ENCODE measurements at regions of chr2 and their contacts with region 1.

Region 1: DNA sequence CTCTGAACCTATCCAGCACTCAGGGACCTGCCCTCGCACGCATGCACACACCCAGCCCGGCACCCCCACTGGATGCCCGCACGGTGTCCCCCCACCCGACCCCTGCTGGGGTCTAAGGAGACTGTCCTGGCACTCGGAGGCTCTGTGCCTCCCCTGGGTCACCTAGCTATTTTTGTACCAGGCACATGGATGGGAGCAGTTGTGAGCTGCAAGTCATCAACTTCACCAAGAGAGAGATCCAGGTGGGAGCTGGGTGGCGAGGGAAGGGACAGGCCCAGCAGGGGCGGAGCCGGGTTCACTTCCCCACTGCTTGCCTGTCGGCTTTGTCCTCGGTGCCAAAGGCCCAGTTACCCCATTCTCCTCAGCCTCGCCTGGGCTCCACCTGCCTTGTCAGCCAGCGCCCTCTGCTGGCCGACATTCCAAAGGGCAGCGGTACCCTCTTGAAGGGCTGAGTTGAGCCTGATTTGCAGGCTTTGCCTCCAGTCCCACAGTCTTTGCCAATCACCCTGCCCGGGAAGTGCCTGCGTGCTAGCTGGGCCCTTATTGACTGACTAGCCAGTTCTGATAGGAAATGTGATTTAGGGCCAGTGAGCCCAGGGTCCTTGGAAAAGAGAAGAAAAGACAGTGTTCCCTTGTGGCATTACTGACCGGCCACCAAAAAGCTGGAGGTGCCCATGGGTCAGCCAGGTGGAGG is 5.8 kb downstream of the NT5DC4 start:
- DNase-seq: peak; percentile 92 to 93 (median 93)
- ATAC-seq: peak; percentile 97
- H3K4me3 ChIP-seq: no peak overlapping the region
- H3K4me1 ChIP-seq: no peaks in the 10 kb centered on the region
- CTCF ChIP-seq: peak; percentile 95

Region 2: GRCh38 chr2:112597537-112598322 is 128.9 kb before region 1 on chr2:
- intact Hi-C with region 1: loop called in 1 of 2 experiments (anchors 5 kb)
- DNase-seq: no peak
- ATAC-seq: no peak
- H3K4me3 ChIP-seq: no peak overlapping the region
- H3K4me1 ChIP-seq: peaks cover 7% of the 10 kb centered on the region
- CTCF ChIP-seq: no peak

Region 3: GRCh38 chr2:112626604-112627059 is 100.0 kb before region 1 on chr2:
- intact Hi-C with region 1: loop called (anchors 10 kb)
- DNase-seq: peak; percentile 62 to 75 (median 67)
- ATAC-seq: peak; percentile 71
- H3K4me3 ChIP-seq: no peak overlapping the region
- H3K4me1 ChIP-seq: peaks cover 13% of the 10 kb centered on the region
- CTCF ChIP-seq: peak; percentile 76

Region 4: DNA sequence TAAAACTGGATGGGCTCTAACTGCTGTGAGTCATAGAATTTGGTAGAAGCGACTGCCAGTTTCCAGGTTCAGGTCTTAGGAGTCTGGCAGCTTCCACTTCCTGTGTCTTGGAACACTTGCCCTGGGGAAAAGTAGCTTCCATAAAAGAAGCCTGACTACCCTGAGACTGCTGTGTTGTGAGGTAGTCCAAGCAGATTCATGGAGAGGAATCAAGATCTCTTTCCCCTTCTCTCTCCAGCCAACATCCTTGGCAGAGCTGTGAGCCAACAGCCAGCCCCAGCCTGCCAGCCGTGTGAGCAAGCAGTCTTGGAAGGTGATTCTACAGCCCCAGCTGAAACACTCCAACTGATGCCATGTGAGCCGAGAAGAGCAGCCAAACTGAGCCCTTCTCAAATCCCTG is 47.2 kb before region 1 on chr2:
- intact Hi-C with region 1: no loop called
- DNase-seq: no peak
- ATAC-seq: no peak
- H3K4me3 ChIP-seq: no peak overlapping the region
- H3K4me1 ChIP-seq: no peaks in the 10 kb centered on the region
- CTCF ChIP-seq: no peak

Region 5: DNA sequence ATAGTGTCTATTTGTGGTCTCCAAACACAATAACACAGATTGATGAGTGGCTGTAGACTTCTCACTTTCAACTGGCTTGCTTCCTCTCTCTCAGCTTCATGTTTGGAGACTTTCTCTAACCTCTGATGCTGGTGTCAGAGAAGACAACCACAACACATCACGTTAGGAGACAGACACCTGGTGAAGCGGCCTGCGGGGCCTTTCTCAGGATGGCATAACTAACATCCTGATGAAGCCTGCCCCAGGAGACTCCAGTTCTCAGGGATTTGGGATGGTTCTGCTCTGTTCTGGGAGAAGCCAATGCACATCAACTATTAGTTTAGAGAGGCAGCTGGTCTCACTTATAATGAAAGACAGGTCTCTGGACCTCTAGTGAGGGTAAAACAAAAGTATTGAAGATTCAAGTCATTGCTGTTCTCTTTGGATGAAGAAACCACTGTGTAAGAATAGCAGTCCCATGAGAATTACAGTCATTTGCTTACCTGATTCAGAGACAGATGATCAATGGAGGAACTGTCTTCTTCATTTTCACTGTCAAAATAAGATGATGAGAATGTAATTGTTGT is 55.7 kb after region 1 on chr2:
- intact Hi-C with region 1: no loop called
- DNase-seq: no peak
- ATAC-seq: no peak
- H3K4me3 ChIP-seq: no peak overlapping the region
- H3K4me1 ChIP-seq: no peaks in the 10 kb centered on the region
- CTCF ChIP-seq: no peak

Measured in mucosa of descending colon (tissue), 3 donors.